BJ (cell line): ENCODE measurements at regions of chr1 and their contacts with region 1.

Region 1: GRCh38 chr1:18883636-18884418 is 18.5 kb downstream of the ALDH4A1 start:
- DNase-seq: peak; percentile 16
- H3K4me3 ChIP-seq: no peak overlapping the region
- H3K27me3 ChIP-seq: no peaks in the 10 kb centered on the region
- CTCF ChIP-seq: peak; percentile 94

Region 2: GRCh38 chr1:18761948-18762850 is 121.6 kb before region 1 on chr1:
- CTCF ChIA-PET with region 1: no interaction called
- POLR2A ChIA-PET with region 1: no interaction called
- DNase-seq: no peak
- H3K4me3 ChIP-seq: no peak overlapping the region
- H3K27me3 ChIP-seq: no peaks in the 10 kb centered on the region
- CTCF ChIP-seq: no peak

Region 3: GRCh38 chr1:18972531-18972930 is 88.7 kb after region 1 on chr1:
- CTCF ChIA-PET with region 1: interaction called, 14 read pairs
- POLR2A ChIA-PET with region 1: no interaction called
- DNase-seq: no peak
- H3K4me3 ChIP-seq: no peak overlapping the region
- H3K27me3 ChIP-seq: no peaks in the 10 kb centered on the region
- CTCF ChIP-seq: 0 out of 2 replicates have a peak, but pooled peaks have one; percentile 25

Region 4: GRCh38 chr1:18989176-18989809 is 105.5 kb after region 1 on chr1:
- CTCF ChIA-PET with region 1: no interaction called
- POLR2A ChIA-PET with region 1: no interaction called
- DNase-seq: no peak
- H3K4me3 ChIP-seq: no peak overlapping the region
- H3K27me3 ChIP-seq: peaks cover 7% of the 10 kb centered on the region; the same call in 1 of the 2 replicates
- CTCF ChIP-seq: no peak

Region 5: GRCh38 chr1:19096036-19096833 is 212.4 kb after region 1 on chr1:
- CTCF ChIA-PET with region 1: interaction called, 13 read pairs
- POLR2A ChIA-PET with region 1: no interaction called
- DNase-seq: no peak
- H3K4me3 ChIP-seq: no peak overlapping the region
- H3K27me3 ChIP-seq: no peaks in the 10 kb centered on the region
- CTCF ChIP-seq: peak; percentile 46

Region 6: DNA sequence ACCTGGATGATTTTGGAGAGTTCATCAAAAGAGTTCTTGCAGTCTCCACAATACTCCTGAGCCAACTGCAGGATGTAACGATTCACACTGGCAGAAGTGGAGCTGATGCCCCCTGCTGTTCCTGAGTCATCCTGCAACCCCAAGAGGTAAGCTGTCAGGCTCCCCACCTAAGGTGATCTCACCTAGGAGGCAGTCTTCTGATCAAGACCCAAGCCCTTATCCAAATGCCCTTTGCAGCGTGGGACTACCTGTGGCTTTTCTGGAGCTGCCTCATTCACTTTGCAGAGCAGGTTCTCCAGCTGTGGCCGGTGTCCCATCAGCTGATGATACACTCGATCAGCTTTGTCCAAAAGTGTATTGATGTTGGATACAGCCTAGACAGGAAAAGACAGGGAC is 229.9 kb after region 1 on chr1:
- CTCF ChIA-PET with region 1: interaction called, 19 read pairs
- POLR2A ChIA-PET with region 1: no interaction called
- DNase-seq: no peak
- H3K4me3 ChIP-seq: no peak overlapping the region
- H3K27me3 ChIP-seq: no peaks in the 10 kb centered on the region
- CTCF ChIP-seq: peak; percentile 57